CD8-positive, alpha-beta memory T cell (primary cell): ENCODE measurements at regions of chr2 and their contacts with region 1.

Region 1: GRCh38 chr2:109510136-109511028 is 103.4 kb downstream of the SEPTIN10 start:
- DNase-seq: peak; percentile 45 to 79 (median 56)
- H3K4me3 ChIP-seq: no peak overlapping the region
- H3K4me3 Mint-ChIP-seq: no peak overlapping the region
- H3K27ac ChIP-seq: no peak overlapping the region
- H3K27ac Mint-ChIP-seq: no peak overlapping the region
- H3K4me1 ChIP-seq: no peaks in the 10 kb centered on the region
- H3K4me1 Mint-ChIP-seq: peaks cover 8 to 13% (median 12%) of the 10 kb centered on the region in 3 donors
- H3K27me3 ChIP-seq: no peaks in the 10 kb centered on the region
- H3K27me3 Mint-ChIP-seq: peaks cover under 1 to 7% of the 10 kb centered on the region in 2 donors

Region 2: GRCh38 chr2:108855194-108855593 is 655.2 kb before region 1 on chr2:
- CTCF ChIA-PET with region 1: interaction called, 21 read pairs
- POLR2A ChIA-PET with region 1: no interaction called
- DNase-seq: peak in 2 of 5 donors; percentile 11 to 41
- H3K4me3 ChIP-seq: no peak overlapping the region
- H3K4me3 Mint-ChIP-seq: no peak overlapping the region
- H3K27ac ChIP-seq: no peak overlapping the region
- H3K27ac Mint-ChIP-seq: peak overlapping the region in 1 of 8 donors; percentile 4
- H3K4me1 ChIP-seq: no peaks in the 10 kb centered on the region
- H3K4me1 Mint-ChIP-seq: peaks cover 0 to 4% (median 0%) of the 10 kb centered on the region in 3 donors
- H3K27me3 ChIP-seq: no peaks in the 10 kb centered on the region
- H3K27me3 Mint-ChIP-seq: no peaks in the 10 kb centered on the region

Region 3: GRCh38 chr2:108927936-108928659 is 582.3 kb before region 1 on chr2:
- CTCF ChIA-PET with region 1: interaction called, 12 read pairs
- POLR2A ChIA-PET with region 1: no interaction called
- DNase-seq: peak in 2 of 5 donors; percentile 33 to 48
- H3K4me3 ChIP-seq: no peak overlapping the region
- H3K4me3 Mint-ChIP-seq: no peak overlapping the region
- H3K27ac ChIP-seq: no peak overlapping the region
- H3K27ac Mint-ChIP-seq: peak overlapping the region in 1 of 8 donors; percentile 3
- H3K4me1 ChIP-seq: no peaks in the 10 kb centered on the region
- H3K4me1 Mint-ChIP-seq: peaks cover 2 to 6% (median 5%) of the 10 kb centered on the region in 3 donors
- H3K27me3 ChIP-seq: no peaks in the 10 kb centered on the region
- H3K27me3 Mint-ChIP-seq: peaks cover 0 to 2% of the 10 kb centered on the region in 2 donors

Region 4: GRCh38 chr2:109020217-109020637 is 490.2 kb before region 1 on chr2:
- CTCF ChIA-PET with region 1: interaction called, 12 read pairs
- POLR2A ChIA-PET with region 1: no interaction called
- DNase-seq: peak in 2 of 5 donors; percentile 15 to 40
- H3K4me3 ChIP-seq: no peak overlapping the region
- H3K4me3 Mint-ChIP-seq: no peak overlapping the region
- H3K27ac ChIP-seq: no peak overlapping the region
- H3K27ac Mint-ChIP-seq: no peak overlapping the region
- H3K4me1 ChIP-seq: peaks cover 13% of the 10 kb centered on the region
- H3K4me1 Mint-ChIP-seq: peaks cover 6 to 13% (median 10%) of the 10 kb centered on the region in 3 donors
- H3K27me3 ChIP-seq: no peaks in the 10 kb centered on the region
- H3K27me3 Mint-ChIP-seq: peaks cover 0 to 5% of the 10 kb centered on the region in 2 donors

Region 5: DNA sequence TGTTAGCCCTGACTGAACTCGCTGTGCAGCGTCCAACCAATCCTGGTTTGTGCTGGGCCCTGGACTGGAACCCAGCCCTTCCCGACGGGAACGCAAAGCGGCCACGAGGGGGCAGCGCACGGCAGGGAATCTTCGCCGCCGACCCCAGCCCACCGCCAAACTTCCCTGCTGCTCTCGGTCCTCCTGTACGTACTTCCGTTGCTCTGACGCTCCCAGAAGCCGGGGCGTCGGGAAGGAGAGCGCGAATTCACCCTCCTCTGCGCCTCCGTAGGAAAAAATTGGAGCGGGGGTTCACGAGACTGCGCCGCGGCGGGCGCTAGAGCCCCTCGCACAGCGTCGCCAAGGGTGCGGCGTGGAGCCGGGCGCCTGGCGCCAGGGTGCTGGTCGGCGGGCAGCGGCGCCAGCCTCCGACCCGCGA is 382.3 kb before region 1 on chr2:
- CTCF ChIA-PET with region 1: interaction called, 17 read pairs
- POLR2A ChIA-PET with region 1: no interaction called
- DNase-seq: peak in 4 of 5 donors; percentile 39 to 69 (median 49)
- H3K4me3 ChIP-seq: peak overlapping the region; percentile 63
- H3K4me3 Mint-ChIP-seq: peak overlapping the region; percentile 45 to 88 (median 75)
- H3K27ac ChIP-seq: no peak overlapping the region
- H3K27ac Mint-ChIP-seq: peak overlapping the region in 3 of 8 donors; percentile 42 to 67 (median 61)
- H3K4me1 ChIP-seq: peaks cover 10% of the 10 kb centered on the region
- H3K4me1 Mint-ChIP-seq: peaks cover 11 to 17% (median 16%) of the 10 kb centered on the region in 3 donors
- H3K27me3 ChIP-seq: no peaks in the 10 kb centered on the region
- H3K27me3 Mint-ChIP-seq: peaks cover 28 to 57% of the 10 kb centered on the region in 2 donors

Region 6: DNA sequence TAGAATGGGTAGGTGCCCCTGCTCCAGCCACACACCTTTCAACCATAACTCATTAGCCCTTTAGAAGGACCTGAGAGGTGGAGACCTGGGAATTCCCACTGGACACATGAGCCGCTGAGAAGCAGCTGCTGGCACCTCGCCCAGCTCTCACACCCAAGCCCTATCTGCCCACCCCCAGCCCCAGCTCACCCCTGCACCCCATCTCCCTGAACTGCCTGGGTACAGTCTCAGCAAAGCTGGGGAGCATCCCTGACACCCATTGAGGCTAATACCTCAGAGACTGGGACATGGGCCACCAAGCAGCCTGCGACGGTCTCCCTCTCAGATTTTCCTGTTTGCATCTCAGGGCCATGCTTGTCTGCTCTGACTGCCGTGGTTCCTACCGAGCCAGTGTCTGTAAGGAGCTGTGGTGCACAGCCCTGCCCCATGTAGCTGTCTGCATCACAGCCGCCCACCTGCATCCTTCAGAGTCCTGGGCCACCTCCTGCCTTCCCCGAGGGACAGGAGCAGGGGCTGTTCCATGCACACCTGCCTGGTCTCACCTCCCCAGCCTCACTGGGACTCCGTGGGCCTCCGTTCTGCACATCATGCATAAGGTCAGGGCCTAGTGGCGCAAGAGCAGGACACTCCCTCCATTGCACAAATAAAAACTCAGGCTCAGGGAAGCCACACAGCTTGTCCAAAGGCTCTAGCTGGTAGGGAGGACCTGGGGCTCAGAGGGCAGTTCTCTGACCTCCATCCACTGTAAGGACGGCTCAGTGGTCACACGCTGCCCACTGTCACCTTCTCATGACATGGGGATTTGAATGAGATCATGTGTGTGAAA is 13.4 kb after region 1 on chr2:
- CTCF ChIA-PET with region 1: interaction called, 10 read pairs
- POLR2A ChIA-PET with region 1: no interaction called
- DNase-seq: no peak
- H3K4me3 ChIP-seq: no peak overlapping the region
- H3K4me3 Mint-ChIP-seq: no peak overlapping the region
- H3K27ac ChIP-seq: no peak overlapping the region
- H3K27ac Mint-ChIP-seq: no peak overlapping the region
- H3K4me1 ChIP-seq: no peaks in the 10 kb centered on the region
- H3K4me1 Mint-ChIP-seq: no peaks in the 10 kb centered on the region
- H3K27me3 ChIP-seq: no peaks in the 10 kb centered on the region
- H3K27me3 Mint-ChIP-seq: peaks cover 3 to 16% of the 10 kb centered on the region in 2 donors